Natural killer cell (primary cell): ENCODE measurements at regions of chr3 and their contacts with region 1.

Region 1: DNA sequence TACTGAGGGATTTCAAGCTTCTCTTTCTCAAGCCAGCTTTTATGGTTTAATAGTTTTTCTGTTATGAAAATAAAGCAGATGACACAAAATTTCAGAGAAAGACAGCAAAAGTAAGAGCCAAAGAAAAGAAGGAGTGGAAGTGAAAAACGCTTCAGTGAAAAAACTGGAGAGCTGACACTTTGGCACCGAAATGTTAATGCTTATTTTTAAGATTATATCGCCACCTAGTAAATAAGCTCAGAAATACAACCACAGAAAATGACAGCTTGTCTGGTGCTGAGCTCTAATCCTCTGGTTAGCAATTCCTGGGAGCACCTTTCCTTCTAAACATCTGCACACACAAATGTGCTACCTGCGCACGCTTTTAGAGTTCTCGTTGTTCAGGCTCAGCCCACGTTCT is 101.6 kb downstream of the ZPLD1 start:
- DNase-seq: peak in 1 of 2 donors; percentile 46
- ATAC-seq: no peak
- H3K4me3 ChIP-seq: no peak overlapping the region
- H3K4me3 Mint-ChIP-seq: no peak overlapping the region
- H3K27ac ChIP-seq: no peak overlapping the region
- H3K27ac Mint-ChIP-seq: no peak overlapping the region
- H3K4me1 ChIP-seq: peaks cover 8% of the 10 kb centered on the region
- H3K4me1 Mint-ChIP-seq: peaks cover 0 to 8% of the 10 kb centered on the region in 2 donors
- H3K27me3 ChIP-seq: peaks cover 2% of the 10 kb centered on the region
- H3K27me3 Mint-ChIP-seq: peaks cover 0 to 6% of the 10 kb centered on the region in 2 donors
- CTCF ChIP-seq: no peak

Region 2: DNA sequence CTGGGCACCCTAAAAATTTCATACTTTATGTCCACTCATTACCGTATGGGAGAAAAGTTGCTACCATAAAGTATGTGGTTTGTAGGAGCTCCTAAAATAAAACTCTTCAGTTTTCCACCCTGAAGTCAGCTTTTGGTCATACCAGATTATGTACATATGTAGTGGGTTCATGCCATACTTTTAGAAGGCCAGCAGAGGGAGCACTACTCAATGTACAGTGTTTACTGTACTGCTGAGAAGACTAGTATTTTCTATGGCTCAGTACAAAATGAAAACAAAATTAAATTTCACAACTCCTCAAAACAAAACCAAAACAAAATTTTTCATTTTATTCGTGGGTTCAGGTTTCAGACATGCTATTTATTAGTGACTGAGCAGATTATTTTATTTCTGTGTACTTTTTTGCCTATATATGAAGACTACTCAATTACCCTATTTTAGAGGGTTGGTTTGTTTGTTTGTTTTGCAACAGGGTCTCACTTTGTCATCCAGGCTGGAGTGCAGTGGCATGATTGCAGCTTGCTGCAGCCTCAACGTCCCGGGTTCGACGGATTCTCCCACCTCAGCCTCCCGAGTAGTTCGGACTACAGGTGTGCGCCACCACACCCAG is 733.2 kb before region 1 on chr3:
- intact Hi-C with region 1: loop called (anchors 5 kb)
- DNase-seq: peak in 1 of 2 donors; percentile 90
- ATAC-seq: peak; percentile 100
- H3K4me3 ChIP-seq: no peak overlapping the region
- H3K4me3 Mint-ChIP-seq: peak overlapping the region; percentile 56
- H3K27ac ChIP-seq: peak overlapping the region; percentile 31
- H3K27ac Mint-ChIP-seq: peak overlapping the region; percentile 52 to 78
- H3K4me1 ChIP-seq: peaks cover 4% of the 10 kb centered on the region
- H3K4me1 Mint-ChIP-seq: peaks cover 7 to 17% of the 10 kb centered on the region in 2 donors
- H3K27me3 ChIP-seq: no peaks in the 10 kb centered on the region
- H3K27me3 Mint-ChIP-seq: no peaks in the 10 kb centered on the region
- CTCF ChIP-seq: peak; percentile 89

Region 3: GRCh38 chr3:102235679-102236078 is 300.8 kb before region 1 on chr3:
- intact Hi-C with region 1: loop called (anchors 2 kb)
- DNase-seq: no peak
- ATAC-seq: peak in 1 of 3 donors; percentile 36
- H3K4me3 ChIP-seq: no peak overlapping the region
- H3K4me3 Mint-ChIP-seq: no peak overlapping the region
- H3K27ac ChIP-seq: no peak overlapping the region
- H3K27ac Mint-ChIP-seq: no peak overlapping the region
- H3K4me1 ChIP-seq: no peaks in the 10 kb centered on the region
- H3K4me1 Mint-ChIP-seq: no peaks in the 10 kb centered on the region
- H3K27me3 ChIP-seq: no peaks in the 10 kb centered on the region
- H3K27me3 Mint-ChIP-seq: peaks cover 0 to 10% of the 10 kb centered on the region in 2 donors
- CTCF ChIP-seq: peak; percentile 37